ENCODE measurements at regions of chr5 and their contacts with region 1.

Region 1: GRCh38 chr5:90438100-90438499 is 28.5 kb upstream of the CETN3 start:
- DNase-seq: peak in 1 of 2 donors; percentile 24
- H3K4me3 ChIP-seq: no peak overlapping the region
- H3K27ac ChIP-seq: no peak overlapping the region
- H3K4me1 ChIP-seq: peaks cover 0 to 4% (median 2%) of the 10 kb centered on the region in 4 donors
- H3K27me3 ChIP-seq: no peaks in the 10 kb centered on the region
- CTCF ChIP-seq: no peak
- EP300 ChIP-seq: no peak
- POLR2A ChIP-seq: no peak

Region 2: GRCh38 chr5:90293931-90294330 is 144.2 kb before region 1 on chr5:
- intact Hi-C with region 1: no loop called
- DNase-seq: no peak
- H3K4me3 ChIP-seq: no peak overlapping the region
- H3K27ac ChIP-seq: no peak overlapping the region
- H3K4me1 ChIP-seq: no peaks in the 10 kb centered on the region
- H3K27me3 ChIP-seq: no peaks in the 10 kb centered on the region
- CTCF ChIP-seq: no peak
- EP300 ChIP-seq: no peak
- POLR2A ChIP-seq: no peak

Region 3: DNA sequence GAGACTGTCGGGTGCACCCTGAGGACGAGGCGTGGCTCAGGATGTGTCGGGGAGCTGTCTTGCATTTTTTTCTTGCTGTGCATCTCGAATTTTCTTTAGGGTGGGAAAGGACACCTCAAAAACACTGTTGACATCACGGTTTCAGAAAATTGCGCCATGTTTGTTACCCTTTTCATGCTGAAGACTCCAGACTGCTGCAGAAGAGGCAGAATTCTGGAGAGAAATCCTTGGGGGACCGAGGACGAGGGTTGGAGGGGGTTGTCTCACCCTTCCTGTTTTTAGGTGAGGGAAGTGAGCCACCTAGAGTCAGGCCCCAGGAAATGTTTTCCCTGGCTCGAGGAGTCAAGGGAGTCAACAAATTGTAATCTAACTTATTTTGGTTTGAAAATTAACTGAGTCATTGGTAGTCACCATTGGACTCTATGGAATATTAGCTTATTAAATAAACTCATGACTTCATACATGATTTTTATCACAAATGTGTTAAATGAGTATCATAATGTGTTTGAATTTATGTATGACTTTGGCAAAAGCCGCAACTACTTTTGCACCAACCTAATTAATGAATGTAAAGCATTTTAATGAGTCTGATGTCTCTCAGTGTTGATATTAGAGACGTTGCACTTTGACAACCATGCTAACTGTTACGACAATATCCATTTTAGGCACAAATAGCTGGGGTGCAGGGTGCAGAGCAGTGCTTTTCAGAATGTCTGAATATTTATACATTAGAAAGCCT is 92.0 kb after region 1 on chr5:
- intact Hi-C with region 1: loop called (anchors 5 kb)
- DNase-seq: peak; percentile 57 to 91
- H3K4me3 ChIP-seq: peak overlapping the region; percentile 66 to 91 (median 76)
- H3K27ac ChIP-seq: peak overlapping the region; percentile 87 to 95 (median 94)
- H3K4me1 ChIP-seq: peaks cover 17 to 41% (median 35%) of the 10 kb centered on the region in 4 donors
- H3K27me3 ChIP-seq: peaks cover 0 to 27% (median 6%) of the 10 kb centered on the region in 3 donors
- CTCF ChIP-seq: peak in 5 of 7 experiments; percentile 54 to 75 (median 56)
- EP300 ChIP-seq: no peak
- POLR2A ChIP-seq: no peak

Region 4: GRCh38 chr5:90612919-90613318 is 174.8 kb after region 1 on chr5:
- intact Hi-C with region 1: no loop called
- DNase-seq: no peak
- H3K4me3 ChIP-seq: no peak overlapping the region
- H3K27ac ChIP-seq: no peak overlapping the region
- H3K4me1 ChIP-seq: no peaks in the 10 kb centered on the region
- H3K27me3 ChIP-seq: no peaks in the 10 kb centered on the region
- CTCF ChIP-seq: no peak
- EP300 ChIP-seq: no peak
- POLR2A ChIP-seq: no peak